CD8-positive, alpha-beta T cell (primary cell): ENCODE measurements at regions of chr5 and their contacts with region 1.

Region 1: GRCh38 chr5:172770675-172771438 is at the start of gene DUSP1:
- DNase-seq: peak; percentile 97 to 99 (median 98)
- ATAC-seq: peak; percentile 54
- H3K4me3 ChIP-seq: peak within 1 kb of the TSS; percentile 85 to 89
- H3K4me3 Mint-ChIP-seq: peak within 1 kb of the TSS; percentile 95
- H3K27ac ChIP-seq: peak within 1 kb of the TSS; percentile 99 to 100
- H3K27ac Mint-ChIP-seq: peak within 1 kb of the TSS; percentile 98
- H3K4me1 ChIP-seq: peaks cover 36% of the 10 kb centered on the region
- H3K4me1 Mint-ChIP-seq: peaks cover 58% of the 10 kb centered on the region
- H3K27me3 ChIP-seq: no peaks in the 10 kb centered on the region
- H3K27me3 Mint-ChIP-seq: no peaks in the 10 kb centered on the region
- CTCF ChIP-seq: no peak
- total RNA-seq, gene DUSP1: 745 to 767 TPM

Region 2: GRCh38 chr5:172059661-172060100 is 711.2 kb before region 1 on chr5:
- CTCF ChIA-PET with region 1: no interaction called
- POLR2A ChIA-PET with region 1: no interaction called
- intact Hi-C with region 1: loop called in 1 of 2 experiments (anchors 10 kb)
- DNase-seq: peak in 2 of 9 experiments; percentile 39 to 54
- ATAC-seq: no peak
- H3K4me3 ChIP-seq: no peak overlapping the region
- H3K4me3 Mint-ChIP-seq: no peak overlapping the region
- H3K27ac ChIP-seq: no peak overlapping the region
- H3K27ac Mint-ChIP-seq: peak overlapping the region; percentile 61
- H3K4me1 ChIP-seq: peaks cover 9% of the 10 kb centered on the region
- H3K4me1 Mint-ChIP-seq: peaks cover 30% of the 10 kb centered on the region
- H3K27me3 ChIP-seq: no peaks in the 10 kb centered on the region
- H3K27me3 Mint-ChIP-seq: no peaks in the 10 kb centered on the region
- CTCF ChIP-seq: peak; percentile 43

Region 3: GRCh38 chr5:172733131-172733973 is 37.5 kb before region 1 on chr5:
- CTCF ChIA-PET with region 1: no interaction called
- POLR2A ChIA-PET with region 1: no interaction called
- intact Hi-C with region 1: no loop called
- DNase-seq: no peak
- ATAC-seq: no peak
- H3K4me3 ChIP-seq: no peak overlapping the region
- H3K4me3 Mint-ChIP-seq: no peak overlapping the region
- H3K27ac ChIP-seq: no peak overlapping the region
- H3K27ac Mint-ChIP-seq: no peak overlapping the region
- H3K4me1 ChIP-seq: no peaks in the 10 kb centered on the region
- H3K4me1 Mint-ChIP-seq: no peaks in the 10 kb centered on the region
- H3K27me3 ChIP-seq: no peaks in the 10 kb centered on the region
- H3K27me3 Mint-ChIP-seq: no peaks in the 10 kb centered on the region
- CTCF ChIP-seq: no peak

Region 4: GRCh38 chr5:172806897-172807672 is 36.2 kb after region 1 on chr5:
- CTCF ChIA-PET with region 1: no interaction called
- POLR2A ChIA-PET with region 1: interaction called, 10 read pairs
- intact Hi-C with region 1: loop called (anchors 1 to 2 kb)
- DNase-seq: peak; percentile 69 to 95 (median 83)
- ATAC-seq: peak; percentile 96
- H3K4me3 ChIP-seq: peak overlapping the region; percentile 39 to 47
- H3K4me3 Mint-ChIP-seq: peak overlapping the region; percentile 77
- H3K27ac ChIP-seq: peak overlapping the region; percentile 61 to 79
- H3K27ac Mint-ChIP-seq: peak overlapping the region; percentile 90
- H3K4me1 ChIP-seq: peaks cover 10% of the 10 kb centered on the region
- H3K4me1 Mint-ChIP-seq: peaks cover 12% of the 10 kb centered on the region
- H3K27me3 ChIP-seq: no peaks in the 10 kb centered on the region
- H3K27me3 Mint-ChIP-seq: no peaks in the 10 kb centered on the region
- CTCF ChIP-seq: no peak

Region 5: GRCh38 chr5:172920447-172920849 is 149.6 kb after region 1 on chr5:
- CTCF ChIA-PET with region 1: interaction called, 7 read pairs
- POLR2A ChIA-PET with region 1: interaction called, 7 read pairs
- intact Hi-C with region 1: loop called (anchors 1 kb)
- DNase-seq: no peak
- ATAC-seq: no peak
- H3K4me3 ChIP-seq: no peak overlapping the region
- H3K4me3 Mint-ChIP-seq: no peak overlapping the region
- H3K27ac ChIP-seq: no peak overlapping the region
- H3K27ac Mint-ChIP-seq: peak overlapping the region; percentile 100
- H3K4me1 ChIP-seq: peaks cover 26% of the 10 kb centered on the region
- H3K4me1 Mint-ChIP-seq: peaks cover 27% of the 10 kb centered on the region
- H3K27me3 ChIP-seq: no peaks in the 10 kb centered on the region
- H3K27me3 Mint-ChIP-seq: no peaks in the 10 kb centered on the region
- CTCF ChIP-seq: no peak

Region 6: GRCh38 chr5:173144200-173145176 is 373.6 kb after region 1 on chr5 and contains the start of gene BNIP1:
- CTCF ChIA-PET with region 1: no interaction called
- POLR2A ChIA-PET with region 1: no interaction called
- intact Hi-C with region 1: loop called in 1 of 2 experiments (anchors 10 kb)
- DNase-seq: peak; percentile 91 to 98 (median 97)
- ATAC-seq: peak; percentile 94
- H3K4me3 ChIP-seq: peak within 1 kb of the TSS; percentile 74 to 99
- H3K4me3 Mint-ChIP-seq: peak within 1 kb of the TSS; percentile 99
- H3K27ac ChIP-seq: peak within 1 kb of the TSS; percentile 95 to 98
- H3K27ac Mint-ChIP-seq: peak within 1 kb of the TSS; percentile 99
- H3K4me1 ChIP-seq: peaks cover 10% of the 10 kb centered on the region
- H3K4me1 Mint-ChIP-seq: peaks cover 11% of the 10 kb centered on the region
- H3K27me3 ChIP-seq: no peaks in the 10 kb centered on the region
- H3K27me3 Mint-ChIP-seq: no peaks in the 10 kb centered on the region
- CTCF ChIP-seq: peak; percentile 68
- total RNA-seq, gene BNIP1: 22.7 to 24.0 TPM